ENCODE measurements at regions of chr1 and their contacts with region 1.

Region 1: GRCh38 chr1:94805912-94806311 is 14.2 kb upstream of the SLC44A3 start:
- DNase-seq: peak; percentile 63
- H3K4me3 ChIP-seq: no peak overlapping the region
- H3K27ac ChIP-seq: no peak overlapping the region
- H3K4me1 ChIP-seq: peaks cover 6 to 29% of the 10 kb centered on the region in 2 experiments; a peak in 3 of 4 replicates
- H3K27me3 ChIP-seq: no peaks in the 10 kb centered on the region
- CTCF ChIP-seq: peak; percentile 97
- EP300 ChIP-seq: no peak
- RAD21 ChIP-seq: peak; percentile 97

Region 2: DNA sequence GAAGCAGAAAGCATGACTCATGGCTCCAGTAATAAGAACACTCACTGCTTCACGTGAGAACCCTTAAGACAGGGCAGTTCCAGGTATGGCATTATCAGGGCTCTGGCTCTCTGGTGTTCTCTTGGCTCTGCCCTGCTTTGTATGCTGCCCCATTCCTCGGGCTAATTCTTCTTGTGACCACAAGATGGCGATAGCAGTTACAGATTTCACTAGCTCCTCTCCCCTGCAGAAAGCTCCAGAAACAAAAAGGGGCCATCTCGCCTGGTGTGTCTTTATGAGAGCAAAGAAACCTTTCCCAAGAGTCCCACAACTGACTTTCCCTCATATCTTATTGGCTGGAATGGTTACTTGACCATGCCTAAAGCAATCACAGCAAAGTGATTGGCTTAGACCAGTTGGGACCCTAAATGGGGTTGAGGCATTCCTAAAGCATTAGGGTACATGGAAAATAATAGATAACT is 324.4 kb before region 1 on chr1:
- CTCF ChIA-PET with region 1: interaction called, 82 read pairs
- POLR2A ChIA-PET with region 1: no interaction called
- DNase-seq: peak; percentile 57
- H3K4me3 ChIP-seq: no peak overlapping the region; a peak in 1 of 4 replicates
- H3K27ac ChIP-seq: no peak overlapping the region; a peak in 1 of 4 replicates
- H3K4me1 ChIP-seq: no peaks in the 10 kb centered on the region
- H3K27me3 ChIP-seq: no peaks in the 10 kb centered on the region
- CTCF ChIP-seq: peak; percentile 84
- EP300 ChIP-seq: no peak
- RAD21 ChIP-seq: peak; percentile 74

Region 3: GRCh38 chr1:94486990-94487389 is 318.9 kb before region 1 on chr1:
- CTCF ChIA-PET with region 1: interaction called, 82 read pairs
- POLR2A ChIA-PET with region 1: no interaction called
- DNase-seq: no peak
- H3K4me3 ChIP-seq: no peak overlapping the region
- H3K27ac ChIP-seq: no peak overlapping the region
- H3K4me1 ChIP-seq: no peaks in the 10 kb centered on the region
- H3K27me3 ChIP-seq: no peaks in the 10 kb centered on the region
- CTCF ChIP-seq: no peak
- EP300 ChIP-seq: no peak
- RAD21 ChIP-seq: no peak

Region 4: DNA sequence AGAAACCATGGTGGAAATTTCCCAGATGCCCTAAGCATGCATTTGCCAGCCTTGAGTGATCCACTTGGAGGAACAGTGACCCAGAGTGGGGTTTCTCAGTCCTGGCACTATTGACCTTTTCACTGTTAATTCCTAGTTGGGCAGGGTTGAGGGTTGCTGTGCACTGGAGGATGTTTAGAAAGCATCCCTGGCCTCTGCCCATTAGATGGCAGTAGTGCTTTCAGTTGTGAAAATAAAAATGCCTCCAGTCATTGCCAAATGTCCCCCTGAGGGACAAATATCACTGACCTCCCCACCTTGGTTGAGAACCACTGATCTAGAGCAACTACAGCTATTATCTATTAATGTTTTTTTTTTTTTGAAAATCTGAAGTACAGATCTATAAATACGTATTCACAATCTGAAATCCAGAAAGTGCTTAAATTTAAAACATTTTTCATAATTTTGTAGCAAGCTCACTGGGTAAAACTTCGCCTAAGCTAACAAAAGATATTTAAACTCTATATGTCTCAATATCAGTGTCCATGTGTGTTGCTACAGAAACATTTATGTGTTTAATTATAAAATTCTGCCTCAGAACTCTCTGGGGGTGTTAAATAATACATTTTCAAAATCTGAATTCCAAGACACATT is 291.7 kb before region 1 on chr1:
- CTCF ChIA-PET with region 1: interaction called, 82 read pairs
- POLR2A ChIA-PET with region 1: no interaction called
- DNase-seq: peak; percentile 20
- H3K4me3 ChIP-seq: no peak overlapping the region; a peak in 1 of 4 replicates
- H3K27ac ChIP-seq: no peak overlapping the region
- H3K4me1 ChIP-seq: no peaks in the 10 kb centered on the region; a peak in 2 of 4 replicates
- H3K27me3 ChIP-seq: no peaks in the 10 kb centered on the region
- CTCF ChIP-seq: peak; percentile 81
- EP300 ChIP-seq: no peak
- RAD21 ChIP-seq: peak; percentile 78

Region 5: DNA sequence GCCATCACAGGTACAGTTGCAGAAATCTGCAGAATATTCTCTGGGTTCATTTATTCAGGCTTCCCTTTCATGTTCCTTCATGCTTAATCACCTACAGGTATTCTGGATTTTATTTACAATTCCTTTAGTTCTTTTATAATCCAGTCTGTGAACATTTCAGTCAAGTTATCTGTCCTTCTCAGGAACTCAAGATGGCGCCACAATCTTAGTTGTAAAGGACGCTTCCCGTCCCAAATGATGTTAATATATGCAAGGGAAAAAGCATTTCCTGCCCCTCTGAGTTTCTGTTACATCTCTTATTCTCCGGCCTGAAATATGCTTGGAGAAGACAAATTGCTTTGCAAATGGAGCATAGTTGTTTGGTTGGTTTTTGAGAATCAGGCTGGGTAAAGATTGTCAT is 283.6 kb before region 1 on chr1:
- CTCF ChIA-PET with region 1: interaction called, 82 read pairs
- POLR2A ChIA-PET with region 1: no interaction called
- DNase-seq: no peak
- H3K4me3 ChIP-seq: no peak overlapping the region
- H3K27ac ChIP-seq: no peak overlapping the region
- H3K4me1 ChIP-seq: peaks cover 0 to 2% of the 10 kb centered on the region in 2 experiments; a peak in 1 of 4 replicates
- H3K27me3 ChIP-seq: no peaks in the 10 kb centered on the region
- CTCF ChIP-seq: peak; percentile 68
- EP300 ChIP-seq: no peak
- RAD21 ChIP-seq: peak; percentile 87

Region 6: GRCh38 chr1:94532077-94532476 is 273.8 kb before region 1 on chr1:
- CTCF ChIA-PET with region 1: interaction called, 16 read pairs
- POLR2A ChIA-PET with region 1: no interaction called
- DNase-seq: no peak
- H3K4me3 ChIP-seq: no peak overlapping the region
- H3K27ac ChIP-seq: no peak overlapping the region; a peak in 1 of 4 replicates
- H3K4me1 ChIP-seq: peaks cover 0 to 11% of the 10 kb centered on the region in 2 experiments; a peak in 1 of 4 replicates
- H3K27me3 ChIP-seq: no peaks in the 10 kb centered on the region
- CTCF ChIP-seq: peak; percentile 19; the same call in 1 of the 2 replicates
- EP300 ChIP-seq: no peak
- RAD21 ChIP-seq: peak; percentile 42

Region 7: DNA sequence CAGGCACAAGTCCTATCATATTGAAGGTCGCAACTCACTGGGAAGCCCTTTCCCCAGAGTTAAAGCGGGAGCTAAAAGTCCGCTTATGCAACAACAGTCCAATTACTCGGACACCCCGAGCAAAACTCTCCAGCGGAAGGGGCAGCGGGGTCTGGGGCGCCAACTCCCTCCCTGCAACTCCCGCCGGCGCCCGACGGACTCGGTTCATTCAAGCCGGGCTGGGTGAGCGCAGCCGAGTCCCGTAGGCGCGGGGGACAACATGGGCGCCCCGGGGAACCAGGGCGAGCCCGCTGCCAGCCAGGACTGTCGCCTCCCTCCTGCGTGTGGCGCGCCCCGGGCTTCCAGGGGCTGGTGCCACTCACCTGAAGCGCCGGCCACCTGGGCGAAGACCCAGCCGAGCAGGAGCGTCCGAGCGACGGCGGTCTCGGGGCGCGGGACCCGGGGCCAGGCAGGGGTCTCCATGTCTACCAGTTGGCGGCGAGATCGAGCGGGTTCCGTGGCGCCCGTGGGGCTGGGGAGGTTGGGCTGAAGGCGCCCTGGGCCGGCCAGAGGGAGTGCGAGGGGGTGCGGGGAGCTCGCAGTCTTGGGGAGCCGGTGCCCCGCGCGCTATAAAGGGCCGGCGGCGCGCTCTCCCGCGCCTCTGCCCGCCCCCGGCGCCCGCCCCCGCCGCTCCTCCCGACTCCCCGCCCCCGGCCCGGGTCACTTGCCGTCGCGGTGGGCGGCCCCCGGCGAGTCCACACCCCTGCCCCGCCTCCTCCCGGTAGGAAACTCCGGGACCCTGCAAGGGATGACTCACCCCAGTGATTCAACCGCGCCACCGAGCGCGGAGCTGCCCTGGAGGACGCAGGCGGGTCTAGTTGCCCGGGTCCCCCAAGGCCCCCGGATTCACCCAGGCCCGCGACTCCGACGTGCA is 264.5 kb before region 1 on chr1 and contains the start of gene F3:
- CTCF ChIA-PET with region 1: interaction called, 25 read pairs
- POLR2A ChIA-PET with region 1: interaction called, 4 read pairs
- DNase-seq: peak; percentile 92
- H3K4me3 ChIP-seq: peak within 1 kb of the TSS; percentile 73 to 86
- H3K27ac ChIP-seq: peak within 1 kb of the TSS; percentile 41 to 74; a peak in 2 of 4 replicates
- H3K4me1 ChIP-seq: peaks cover 14 to 15% of the 10 kb centered on the region in 2 experiments; a peak in 3 of 4 replicates
- H3K27me3 ChIP-seq: no peaks in the 10 kb centered on the region
- CTCF ChIP-seq: no peak
- EP300 ChIP-seq: no peak; a peak in 1 of 4 replicates
- RAD21 ChIP-seq: no peak
- polyA plus RNA-seq, gene F3: 1.8 and 2.5 TPM in 2 replicates

Region 8: GRCh38 chr1:94715321-94715720 is 90.6 kb before region 1 on chr1:
- CTCF ChIA-PET with region 1: no interaction called
- POLR2A ChIA-PET with region 1: no interaction called
- DNase-seq: no peak
- H3K4me3 ChIP-seq: no peak overlapping the region
- H3K27ac ChIP-seq: no peak overlapping the region
- H3K4me1 ChIP-seq: peaks cover 0 to 11% of the 10 kb centered on the region in 2 experiments; a peak in 2 of 4 replicates
- H3K27me3 ChIP-seq: no peaks in the 10 kb centered on the region
- CTCF ChIP-seq: no peak
- EP300 ChIP-seq: no peak
- RAD21 ChIP-seq: no peak